Activated CD8-positive, alpha-beta T cell treated with anti-CD3 and anti-CD28 coated beads for 36 hours (primary cell): ENCODE measurements at regions of chr6 and their contacts with region 1.

Region 1: DNA sequence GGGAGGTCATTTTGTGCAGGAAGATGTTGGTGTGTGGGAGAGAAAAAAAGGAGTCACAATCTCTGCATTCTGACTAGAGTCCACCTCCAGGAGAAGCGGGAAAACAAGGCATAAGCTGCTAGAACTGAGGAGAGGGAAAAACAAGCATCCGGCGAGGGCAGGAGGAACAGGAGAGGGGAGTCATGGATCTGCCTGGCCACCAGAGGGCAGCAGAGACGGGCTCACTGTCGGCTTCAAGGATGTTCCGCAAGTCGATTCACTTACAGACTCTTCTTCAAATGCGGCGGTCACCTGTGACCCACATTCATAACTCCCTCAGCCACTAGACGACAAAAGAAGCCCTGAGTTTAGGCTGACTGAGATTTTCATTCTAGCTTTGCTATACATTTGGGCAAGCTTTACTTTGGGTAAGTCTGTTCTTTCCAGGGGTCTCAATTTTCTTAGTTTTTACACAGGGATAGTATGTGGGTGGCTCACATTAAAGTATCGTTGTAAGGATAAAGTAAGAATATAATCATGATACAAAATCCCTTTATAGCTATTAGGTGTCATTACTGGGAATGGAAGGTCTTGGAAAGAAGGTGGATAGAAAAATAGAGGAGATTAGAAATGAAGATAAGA is 6.6 kb upstream of the BTNL2 start:
- DNase-seq: peak; percentile 86
- ATAC-seq: peak; percentile 86
- H3K4me3 Mint-ChIP-seq: no peak overlapping the region
- H3K27ac Mint-ChIP-seq: no peak overlapping the region
- H3K4me1 Mint-ChIP-seq: no peaks in the 10 kb centered on the region
- H3K27me3 Mint-ChIP-seq: peaks cover 42% of the 10 kb centered on the region
- CTCF ChIP-seq: peak; percentile 90

Region 2: DNA sequence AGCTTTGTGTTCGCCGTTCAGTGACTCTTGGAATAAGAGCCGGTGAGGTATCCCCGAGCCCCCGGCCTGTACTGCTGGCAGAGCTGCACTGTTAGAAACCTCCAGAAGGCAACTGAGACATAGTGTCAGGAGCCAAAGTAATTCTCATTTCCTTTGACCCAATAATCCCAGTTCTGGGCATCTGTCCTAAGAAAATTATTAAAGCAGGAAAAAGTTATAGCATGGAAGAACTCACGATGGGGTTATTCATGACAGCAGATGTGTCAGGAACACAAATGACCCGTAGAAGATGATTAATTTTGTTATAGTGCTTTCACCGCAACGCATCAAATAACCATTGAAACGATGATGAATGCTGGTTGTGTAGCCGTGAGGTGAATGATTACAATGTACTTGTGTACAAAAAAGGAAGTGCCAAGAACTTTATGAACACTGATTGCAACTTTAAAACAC is 355.0 kb before region 1 on chr6:
- CTCF ChIA-PET with region 1: no interaction called
- POLR2A ChIA-PET with region 1: no interaction called
- intact Hi-C with region 1: no loop called
- DNase-seq: no peak
- ATAC-seq: no peak
- H3K4me3 Mint-ChIP-seq: no peak overlapping the region
- H3K27ac Mint-ChIP-seq: no peak overlapping the region
- H3K4me1 Mint-ChIP-seq: no peaks in the 10 kb centered on the region
- H3K27me3 Mint-ChIP-seq: no peaks in the 10 kb centered on the region
- CTCF ChIP-seq: no peak

Region 3: GRCh38 chr6:32244946-32245398 is 168.6 kb before region 1 on chr6:
- CTCF ChIA-PET with region 1: interaction called, 15 read pairs
- POLR2A ChIA-PET with region 1: no interaction called
- intact Hi-C with region 1: no loop called
- DNase-seq: peak; percentile 77
- ATAC-seq: peak; percentile 75
- H3K4me3 Mint-ChIP-seq: peak overlapping the region; percentile 1
- H3K27ac Mint-ChIP-seq: no peak overlapping the region
- H3K4me1 Mint-ChIP-seq: peaks cover 26% of the 10 kb centered on the region
- H3K27me3 Mint-ChIP-seq: no peaks in the 10 kb centered on the region
- CTCF ChIP-seq: peak; percentile 95

Region 4: GRCh38 chr6:32424589-32425300 is 11.2 kb after region 1 on chr6:
- CTCF ChIA-PET with region 1: interaction called, 34 read pairs
- POLR2A ChIA-PET with region 1: no interaction called
- intact Hi-C with region 1: no loop called
- DNase-seq: no peak
- ATAC-seq: no peak
- H3K4me3 Mint-ChIP-seq: no peak overlapping the region
- H3K27ac Mint-ChIP-seq: no peak overlapping the region
- H3K4me1 Mint-ChIP-seq: no peaks in the 10 kb centered on the region
- H3K27me3 Mint-ChIP-seq: peaks cover 11% of the 10 kb centered on the region
- CTCF ChIP-seq: no peak

Region 5: GRCh38 chr6:32637219-32637880 is 223.8 kb after region 1 on chr6 and contains the start of gene HLA-DQA1:
- CTCF ChIA-PET with region 1: no interaction called
- POLR2A ChIA-PET with region 1: no interaction called
- intact Hi-C with region 1: no loop called
- DNase-seq: peak; percentile 5
- ATAC-seq: peak; percentile 66
- H3K4me3 Mint-ChIP-seq: peak within 1 kb of the TSS; percentile 22
- H3K27ac Mint-ChIP-seq: peak within 1 kb of the TSS; percentile 32
- H3K4me1 Mint-ChIP-seq: peaks cover 14% of the 10 kb centered on the region
- H3K27me3 Mint-ChIP-seq: peaks cover 13% of the 10 kb centered on the region
- CTCF ChIP-seq: no peak
- total RNA-seq, gene HLA-DQA1: 3.4 to 3.9 TPM

Region 6: DNA sequence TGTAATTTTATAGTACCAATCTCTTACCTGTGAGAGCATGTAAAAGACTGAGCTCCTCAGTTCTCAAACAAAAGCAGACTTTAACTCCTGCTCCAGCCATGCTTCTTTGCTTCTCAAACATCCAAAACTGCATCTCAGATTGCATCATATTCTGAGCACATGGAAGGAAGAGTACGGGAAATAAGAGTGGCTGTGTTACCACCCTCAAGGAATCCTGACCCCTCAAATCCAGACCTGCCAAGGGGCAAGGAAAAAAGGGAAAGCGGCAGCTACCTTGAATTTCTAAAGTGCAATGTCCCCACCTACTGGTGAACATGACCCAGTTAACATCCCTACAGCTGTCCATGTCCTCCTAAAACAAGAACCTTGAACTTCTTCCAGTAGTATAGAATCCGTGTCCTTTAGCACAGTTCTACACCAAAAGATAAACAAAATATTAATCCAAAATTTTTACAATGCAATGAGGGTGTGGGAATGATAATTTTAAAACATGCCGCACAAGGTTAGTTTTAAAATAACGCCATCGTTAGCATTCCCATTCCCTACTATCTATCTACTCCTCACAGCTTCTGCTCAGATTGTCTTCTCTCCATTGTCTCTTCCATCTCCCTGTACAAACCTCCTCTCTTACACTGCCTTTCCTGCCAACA is 287.0 kb after region 1 on chr6:
- CTCF ChIA-PET with region 1: interaction called, 53 read pairs
- POLR2A ChIA-PET with region 1: interaction called, 4 read pairs
- intact Hi-C with region 1: loop called (anchors 2 kb)
- DNase-seq: peak; percentile 22
- ATAC-seq: peak; percentile 42
- H3K4me3 Mint-ChIP-seq: no peak overlapping the region
- H3K27ac Mint-ChIP-seq: no peak overlapping the region
- H3K4me1 Mint-ChIP-seq: no peaks in the 10 kb centered on the region
- H3K27me3 Mint-ChIP-seq: peaks cover 30% of the 10 kb centered on the region
- CTCF ChIP-seq: peak; percentile 89

Region 7: GRCh38 chr6:32796848-32797776 is 383.6 kb after region 1 on chr6:
- CTCF ChIA-PET with region 1: interaction called, 47 read pairs
- POLR2A ChIA-PET with region 1: interaction called, 3 read pairs
- intact Hi-C with region 1: loop called (anchors 5 kb)
- DNase-seq: peak; percentile 90
- ATAC-seq: peak; percentile 87
- H3K4me3 Mint-ChIP-seq: peak overlapping the region; percentile 64
- H3K27ac Mint-ChIP-seq: no peak overlapping the region
- H3K4me1 Mint-ChIP-seq: peaks cover 23% of the 10 kb centered on the region
- H3K27me3 Mint-ChIP-seq: peaks cover 41% of the 10 kb centered on the region
- CTCF ChIP-seq: peak; percentile 90